Prostate gland (tissue), 2 donors: ENCODE measurements at regions of chr3 and their contacts with region 1.

Region 1: GRCh38 chr3:101779047-101779821 is at the start of gene NXPE3:
- DNase-seq: peak; percentile 87
- H3K4me3 ChIP-seq: peak within 1 kb of the TSS; percentile 61 to 80
- H3K27ac ChIP-seq: peak within 1 kb of the TSS; percentile 76 to 85
- H3K4me1 ChIP-seq: no peaks in the 10 kb centered on the region
- H3K27me3 ChIP-seq: no peaks in the 10 kb centered on the region
- CTCF ChIP-seq: peak in 1 of 4 experiments; percentile 12
- POLR2A ChIP-seq: peak; percentile 50
- total RNA-seq, gene NXPE3: 7.8 to 14.1 TPM

Region 2: DNA sequence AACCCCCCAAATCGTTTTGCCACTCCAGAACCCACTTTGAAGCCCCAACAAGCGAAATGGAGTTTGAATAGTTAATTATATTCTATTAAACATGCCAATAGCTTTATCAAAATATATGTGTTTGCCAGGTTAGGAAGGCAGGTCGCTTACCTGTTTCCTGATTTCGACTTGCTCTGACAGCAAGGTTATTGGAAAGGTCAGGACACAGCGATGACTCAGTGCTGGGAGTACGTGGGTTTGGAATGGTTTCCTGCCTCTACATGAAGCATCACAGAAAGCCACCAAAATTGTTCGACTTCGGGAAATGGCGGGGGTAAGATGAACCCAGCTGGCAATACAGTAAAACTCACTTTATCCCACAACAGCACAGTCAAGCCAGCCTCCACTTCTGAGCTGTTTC is 650.4 kb before region 1 on chr3:
- intact Hi-C with region 1: no loop called
- DNase-seq: no peak
- H3K4me3 ChIP-seq: no peak overlapping the region
- H3K27ac ChIP-seq: no peak overlapping the region
- H3K4me1 ChIP-seq: no peaks in the 10 kb centered on the region
- H3K27me3 ChIP-seq: no peaks in the 10 kb centered on the region
- CTCF ChIP-seq: no peak
- POLR2A ChIP-seq: no peak

Region 3: DNA sequence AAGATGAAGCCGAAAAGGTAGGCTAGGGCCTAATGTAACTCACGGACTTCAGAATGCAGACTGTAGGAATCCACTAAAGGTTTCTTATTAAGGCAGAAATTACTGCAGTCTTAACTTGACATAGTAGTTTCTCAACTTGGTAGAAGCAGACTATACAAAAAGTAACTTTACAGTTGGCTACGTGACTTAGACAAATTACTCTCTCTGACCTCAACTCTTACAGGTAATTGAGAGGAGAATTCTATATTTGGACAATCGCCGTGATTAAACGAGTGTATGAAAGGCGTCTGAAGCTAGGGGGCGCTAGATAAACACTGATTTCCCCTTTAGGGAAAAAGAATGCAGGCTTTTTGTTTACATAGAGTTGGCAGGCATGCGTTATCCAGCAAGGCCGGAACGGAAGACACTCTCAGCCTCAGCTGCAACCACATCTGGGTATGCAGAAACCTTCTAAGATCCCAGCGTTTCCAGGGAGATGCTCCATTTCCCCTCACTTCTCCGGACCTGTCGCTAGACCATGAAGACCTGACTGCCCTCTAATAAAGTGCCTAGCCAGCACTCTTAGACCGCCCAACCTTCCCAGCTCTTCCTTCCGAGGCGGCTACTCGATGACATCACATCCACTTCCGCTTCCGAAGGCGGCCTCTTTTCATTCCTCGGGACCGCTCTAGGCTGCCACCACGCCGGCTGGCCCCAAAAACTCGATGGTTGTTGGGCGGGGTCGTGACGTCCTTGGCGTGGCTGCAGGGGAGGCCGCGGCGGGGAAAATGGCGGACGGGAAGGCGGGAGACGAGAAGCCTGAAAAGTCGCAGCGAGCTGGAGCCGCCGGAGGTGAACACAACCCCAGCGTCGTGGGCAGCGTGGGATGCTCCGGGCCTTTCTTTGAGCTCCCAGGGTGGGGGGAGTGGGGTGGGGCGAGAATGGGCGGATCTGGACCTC is 205.5 kb before region 1 on chr3 and contains the start of gene PCNP:
- intact Hi-C with region 1: loop called (anchors 10 kb)
- DNase-seq: peak; percentile 99
- H3K4me3 ChIP-seq: peak within 1 kb of the TSS; percentile 91 to 95
- H3K27ac ChIP-seq: peak within 1 kb of the TSS; percentile 98 to 99
- H3K4me1 ChIP-seq: no peaks in the 10 kb centered on the region
- H3K27me3 ChIP-seq: no peaks in the 10 kb centered on the region
- CTCF ChIP-seq: peak; percentile 75 to 95 (median 94)
- POLR2A ChIP-seq: peak; percentile 63
- total RNA-seq, gene PCNP: 59.2 to 92.9 TPM

Region 4: DNA sequence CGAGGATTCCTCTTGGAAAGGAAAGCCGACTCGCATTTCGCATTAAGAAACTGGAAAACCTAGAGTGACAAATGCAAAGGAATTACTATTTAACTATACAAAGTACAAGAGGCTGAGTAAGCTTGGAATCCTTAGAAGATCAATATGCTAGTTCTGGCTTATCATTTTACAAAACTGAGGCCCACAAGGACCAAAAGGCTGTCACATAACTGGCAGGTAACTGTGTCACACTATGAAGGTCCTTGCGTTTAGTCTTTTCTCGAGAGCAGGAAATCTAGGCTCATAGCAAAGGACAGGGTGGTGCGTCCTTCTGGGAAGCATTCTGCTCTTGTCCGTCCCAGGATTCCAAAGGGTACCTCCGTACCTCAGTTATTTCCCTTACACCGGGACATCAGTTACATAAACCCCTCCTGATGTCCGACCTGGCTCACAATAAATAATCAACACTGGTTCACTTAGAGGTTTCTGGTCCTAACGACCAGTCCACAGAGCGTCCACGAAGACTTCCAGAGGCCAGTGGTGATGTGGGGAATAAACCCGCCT is 93.3 kb before region 1 on chr3:
- intact Hi-C with region 1: loop called (anchors 2 kb)
- DNase-seq: no peak
- H3K4me3 ChIP-seq: peak overlapping the region; percentile 56 to 67
- H3K27ac ChIP-seq: peak overlapping the region; percentile 89 to 92
- H3K4me1 ChIP-seq: peaks cover 4% of the 10 kb centered on the region
- H3K27me3 ChIP-seq: no peaks in the 10 kb centered on the region
- CTCF ChIP-seq: no peak
- POLR2A ChIP-seq: no peak

Region 5: GRCh38 chr3:101703169-101703568 is 76.1 kb before region 1 on chr3:
- intact Hi-C with region 1: no loop called
- DNase-seq: no peak
- H3K4me3 ChIP-seq: no peak overlapping the region
- H3K27ac ChIP-seq: no peak overlapping the region
- H3K4me1 ChIP-seq: no peaks in the 10 kb centered on the region
- H3K27me3 ChIP-seq: no peaks in the 10 kb centered on the region
- CTCF ChIP-seq: no peak
- POLR2A ChIP-seq: no peak

Region 6: DNA sequence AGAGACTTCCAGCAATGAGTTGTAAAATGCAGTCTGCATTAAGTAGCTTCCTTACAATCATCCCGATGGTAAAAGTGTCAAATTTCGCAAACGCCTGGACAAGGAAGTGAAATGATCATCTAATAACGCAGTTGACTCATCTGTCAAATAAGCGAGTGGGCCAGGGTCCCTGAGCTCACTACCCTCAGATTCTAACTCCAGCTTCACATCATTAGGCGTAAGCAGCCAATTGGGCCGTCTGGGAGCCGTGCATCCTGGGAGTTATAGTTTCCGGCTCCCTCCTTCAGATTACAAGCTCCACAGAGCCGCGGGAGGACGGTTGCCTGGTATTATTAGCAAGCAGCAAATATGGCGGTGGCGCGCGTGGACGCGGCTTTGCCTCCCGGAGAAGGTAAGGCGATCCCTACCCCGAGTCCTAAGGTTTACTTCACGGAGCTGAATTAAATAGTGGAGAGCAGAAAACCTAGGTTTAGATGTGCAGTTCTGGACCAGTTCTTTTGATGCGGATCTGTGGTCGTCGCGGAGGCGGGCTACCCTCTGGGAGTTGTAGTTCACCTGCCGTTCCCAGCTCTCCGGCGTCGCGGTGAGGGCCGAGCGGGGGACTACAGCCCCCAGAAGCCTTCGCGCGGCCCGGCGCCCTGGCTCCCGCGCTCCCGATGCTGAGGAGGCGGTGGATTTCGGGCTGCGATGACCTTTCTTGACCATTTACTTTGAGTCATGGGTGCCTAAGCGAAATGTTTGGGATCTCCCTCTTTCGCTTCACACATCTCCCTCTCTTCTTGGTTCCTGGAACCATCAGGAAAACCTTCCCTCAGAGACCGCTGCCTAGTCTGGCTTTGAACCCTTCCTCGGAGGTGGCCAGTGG is 54.7 kb before region 1 on chr3 and contains the start of gene CEP97:
- intact Hi-C with region 1: loop called (anchors 1 kb)
- DNase-seq: peak; percentile 90
- H3K4me3 ChIP-seq: peak within 1 kb of the TSS; percentile 56 to 64
- H3K27ac ChIP-seq: peak within 1 kb of the TSS; percentile 76
- H3K4me1 ChIP-seq: no peaks in the 10 kb centered on the region
- H3K27me3 ChIP-seq: no peaks in the 10 kb centered on the region
- CTCF ChIP-seq: peak in 2 of 4 experiments; percentile 16 to 18
- POLR2A ChIP-seq: peak; percentile 31
- total RNA-seq, gene CEP97: 5.5 to 14.7 TPM

Region 7: DNA sequence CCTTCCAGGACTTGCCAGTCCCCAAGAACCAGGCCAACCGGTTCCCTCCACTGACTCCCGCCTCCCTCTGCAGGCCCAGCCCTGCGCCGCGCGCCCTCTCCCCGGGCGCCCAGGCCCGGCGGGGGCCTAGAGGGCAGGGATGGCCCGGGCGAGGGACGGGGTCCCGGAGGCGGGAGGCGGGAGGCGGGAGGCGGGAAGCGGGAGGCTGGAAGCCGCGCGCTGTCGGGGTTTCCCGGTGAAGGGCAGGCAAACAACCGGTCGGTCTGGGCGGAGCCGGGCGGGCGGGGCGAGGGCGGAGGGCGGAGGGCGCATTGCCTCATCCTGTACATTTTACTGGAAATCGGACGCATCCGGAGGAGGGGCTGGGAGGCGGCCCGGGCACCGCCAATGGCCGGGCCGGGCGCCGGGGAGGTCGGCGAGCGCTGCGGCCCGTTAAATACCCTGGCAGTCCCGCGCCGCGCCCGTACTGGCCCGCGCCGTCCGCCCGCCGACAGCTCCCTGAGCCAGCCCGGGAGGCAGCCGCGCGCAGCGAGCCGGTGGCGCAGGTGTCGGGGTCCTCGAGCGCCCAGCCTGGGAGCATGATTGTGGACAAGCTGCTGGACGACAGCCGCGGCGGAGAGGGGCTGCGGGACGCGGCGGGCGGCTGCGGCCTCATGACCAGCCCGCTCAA is 70.0 kb after region 1 on chr3 and contains the start of gene NFKBIZ:
- intact Hi-C with region 1: no loop called
- DNase-seq: peak; percentile 97
- H3K4me3 ChIP-seq: peak within 1 kb of the TSS; percentile 75 to 94
- H3K27ac ChIP-seq: peak within 1 kb of the TSS; percentile 95 to 96
- H3K4me1 ChIP-seq: peaks cover 11% of the 10 kb centered on the region
- H3K27me3 ChIP-seq: no peaks in the 10 kb centered on the region
- CTCF ChIP-seq: peak in 1 of 4 experiments; percentile 30
- POLR2A ChIP-seq: peak; percentile 98
- total RNA-seq, gene NFKBIZ: 25.7 to 38.3 TPM

Region 8: DNA sequence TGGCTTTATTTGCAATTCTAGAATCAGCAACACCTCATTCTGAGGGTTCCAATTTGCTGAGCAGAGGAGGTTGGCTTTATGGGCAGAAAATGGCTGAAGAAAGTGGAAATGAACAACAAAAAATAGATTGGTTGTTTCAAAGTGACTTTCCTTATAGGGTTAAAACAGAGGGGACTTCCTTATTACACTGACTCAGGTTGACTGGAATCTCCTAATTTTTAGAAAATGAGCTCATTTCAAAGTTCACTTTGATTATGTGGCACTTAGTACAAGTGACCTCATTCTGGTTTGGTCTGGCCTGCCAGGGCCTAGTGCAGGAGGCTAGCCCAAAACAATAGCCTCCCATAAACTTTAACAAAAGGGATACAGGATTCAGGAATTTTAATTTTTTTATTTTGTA is 111.5 kb after region 1 on chr3:
- intact Hi-C with region 1: no loop called
- DNase-seq: no peak
- H3K4me3 ChIP-seq: no peak overlapping the region
- H3K27ac ChIP-seq: no peak overlapping the region
- H3K4me1 ChIP-seq: no peaks in the 10 kb centered on the region
- H3K27me3 ChIP-seq: no peaks in the 10 kb centered on the region
- CTCF ChIP-seq: no peak
- POLR2A ChIP-seq: no peak